IMR-90 (cell line): ENCODE measurements at regions of chr16 and their contacts with region 1.

Region 1: DNA sequence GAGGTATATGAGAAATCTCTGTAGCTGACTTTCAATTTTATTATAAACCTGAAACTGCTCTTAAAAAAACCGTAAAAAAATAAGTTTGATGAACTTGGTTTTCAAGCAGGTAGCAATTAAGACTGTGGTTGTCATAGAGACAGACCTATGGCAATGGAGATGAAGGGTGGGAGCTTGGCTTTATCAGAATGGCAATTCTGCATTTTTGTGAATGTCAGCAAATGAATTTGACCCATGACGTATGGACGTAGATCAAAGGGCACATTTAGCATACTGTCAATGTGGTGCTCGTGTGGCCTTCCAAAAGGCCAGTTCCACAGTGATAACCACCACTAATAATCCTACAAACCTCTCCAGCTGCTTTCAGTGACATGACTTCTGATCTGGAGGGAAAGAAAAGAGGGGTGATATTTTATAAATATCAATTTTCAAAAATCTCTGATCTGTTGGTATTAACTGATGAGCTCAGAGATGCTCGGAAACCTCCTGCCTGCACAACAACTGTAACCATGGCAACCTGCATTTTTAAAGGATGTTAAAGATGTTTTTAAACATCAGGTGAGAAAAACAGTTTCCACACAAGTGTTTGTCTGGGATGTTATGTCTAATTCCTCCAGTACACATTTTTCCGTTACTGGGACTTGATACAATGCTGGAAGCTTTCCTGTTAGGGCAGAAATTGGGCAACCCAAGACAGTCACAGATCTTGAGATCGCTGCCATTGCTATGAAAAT is 533.7 kb downstream of the CDH13 start:
- DNase-seq: no peak
- ATAC-seq: no peak
- H3K4me3 ChIP-seq: no peak overlapping the region
- H3K27ac ChIP-seq: no peak overlapping the region
- H3K4me1 ChIP-seq: no peaks in the 10 kb centered on the region
- H3K27me3 ChIP-seq: no peaks in the 10 kb centered on the region
- CTCF ChIP-seq: no peak
- POLR2A ChIP-seq: no peak
- RAD21 ChIP-seq: no peak

Region 2: GRCh38 chr16:82954224-82954929 is 206.1 kb before region 1 on chr16:
- CTCF ChIA-PET with region 1: no interaction called
- POLR2A ChIA-PET with region 1: no interaction called
- dilution Hi-C with region 1: no loop called
- in situ Hi-C with region 1: no loop called
- intact Hi-C with region 1: loop called (anchors 10 kb)
- DNase-seq: peak; percentile 70
- ATAC-seq: peak; percentile 32; the same call in 1 of the 2 replicates
- H3K4me3 ChIP-seq: no peak overlapping the region
- H3K27ac ChIP-seq: no peak overlapping the region
- H3K4me1 ChIP-seq: peaks cover 2% of the 10 kb centered on the region; the same call in 1 of the 2 replicates
- H3K27me3 ChIP-seq: no peaks in the 10 kb centered on the region
- CTCF ChIP-seq: no peak
- POLR2A ChIP-seq: no peak
- RAD21 ChIP-seq: no peak